ENCODE measurements at regions of chr9 and their contacts with region 1.

Region 1: GRCh38 chr9:130860458-130861316 is 25.6 kb downstream of the ABL1 start:
- DNase-seq: peak; percentile 96

Region 2: GRCh38 chr9:130770679-130771442 is 89.8 kb before region 1 on chr9:
- intact Hi-C with region 1: loop called (anchors 1 to 5 kb)
- DNase-seq: no peak

Region 3: DNA sequence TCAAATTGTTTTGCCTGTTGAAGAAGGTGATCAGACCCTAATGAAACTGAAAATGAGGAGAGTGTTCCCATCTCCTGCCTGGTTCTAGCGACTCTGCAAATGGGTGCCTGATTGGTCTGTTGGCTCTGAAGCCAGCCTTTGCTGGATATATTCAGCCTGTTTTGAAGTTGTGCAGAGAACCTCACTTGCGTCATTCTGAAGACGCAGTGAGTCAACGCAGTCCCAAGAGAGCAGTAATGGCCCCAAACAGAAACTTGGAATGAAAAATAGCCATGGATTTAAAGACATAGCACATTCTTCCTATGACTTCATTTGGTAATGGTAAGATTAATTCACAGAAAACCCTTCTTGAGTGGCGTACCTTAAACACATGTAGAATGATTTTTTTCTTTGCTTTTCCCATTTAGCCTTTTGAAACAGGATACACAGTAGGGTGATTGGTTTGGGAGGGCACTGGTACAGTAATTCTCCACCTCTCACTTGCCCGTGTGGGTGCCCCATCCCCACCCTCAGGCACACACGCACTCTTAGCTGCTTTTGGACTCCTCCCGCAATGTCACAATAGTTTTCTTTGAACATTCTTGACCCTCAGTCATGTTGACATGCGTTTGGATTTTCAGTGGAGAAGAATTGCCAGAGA is 79.7 kb before region 1 on chr9:
- intact Hi-C with region 1: loop called (anchors 1 to 5 kb)
- DNase-seq: peak; percentile 85

Region 4: DNA sequence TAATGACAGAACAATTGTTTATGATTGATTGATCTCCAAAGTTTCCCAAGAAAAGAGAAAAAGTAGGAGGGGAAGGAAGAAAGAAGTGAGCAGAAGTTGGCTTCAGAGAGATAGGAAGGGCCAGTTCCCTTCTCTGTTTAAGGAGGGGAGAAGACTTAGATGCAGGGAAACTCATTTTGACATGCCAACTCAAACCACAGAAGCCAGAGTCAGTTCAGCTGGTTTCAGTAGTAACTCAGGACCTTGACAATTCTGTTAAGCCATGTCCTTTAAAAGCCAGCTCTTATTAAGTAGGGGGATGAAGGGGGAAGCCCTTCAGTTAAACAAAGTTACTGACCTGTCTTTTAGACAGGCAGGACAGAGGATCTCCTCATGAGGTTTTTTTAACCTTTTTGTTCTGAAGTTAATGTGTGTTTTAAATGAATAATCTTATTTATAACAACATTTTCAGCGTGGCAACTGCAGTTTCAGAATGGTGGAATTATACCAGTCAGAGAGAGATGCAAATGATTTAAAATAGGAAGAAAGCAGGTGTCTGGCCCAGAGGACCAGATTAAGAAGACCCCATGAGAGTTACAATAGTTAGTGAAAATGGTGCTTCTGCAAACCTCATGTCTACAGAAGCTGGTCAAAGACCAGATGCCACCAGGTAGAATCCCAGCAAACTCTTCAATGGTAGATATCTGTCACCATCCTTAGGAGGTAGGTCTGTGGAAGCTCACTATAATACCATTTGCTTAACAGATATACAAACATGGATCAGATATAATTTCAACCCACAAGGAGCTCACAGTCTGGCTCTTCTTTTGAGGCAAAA is 55.0 kb before region 1 on chr9:
- intact Hi-C with region 1: no loop called
- DNase-seq: no peak

Region 5: GRCh38 chr9:130845901-130846481 is 14.7 kb before region 1 on chr9:
- intact Hi-C with region 1: loop called in 1 of 2 experiments (anchors 1 kb)
- DNase-seq: no peak

Measured in posterior vena cava (tissue), 2 donors.